Common myeloid progenitor, CD34-positive (primary cell): ENCODE measurements at regions of chr17 and their contacts with region 1.

Region 1: GRCh38 chr17:74474043-74474792 is 7.8 kb downstream of the CD300A start:
- DNase-seq: no peak
- H3K4me3 ChIP-seq: no peak overlapping the region
- H3K27ac ChIP-seq: no peak overlapping the region
- H3K4me1 ChIP-seq: peaks cover 2 to 32% (median 23%) of the 10 kb centered on the region in 4 experiments
- H3K27me3 ChIP-seq: no peaks in the 10 kb centered on the region

Region 2: DNA sequence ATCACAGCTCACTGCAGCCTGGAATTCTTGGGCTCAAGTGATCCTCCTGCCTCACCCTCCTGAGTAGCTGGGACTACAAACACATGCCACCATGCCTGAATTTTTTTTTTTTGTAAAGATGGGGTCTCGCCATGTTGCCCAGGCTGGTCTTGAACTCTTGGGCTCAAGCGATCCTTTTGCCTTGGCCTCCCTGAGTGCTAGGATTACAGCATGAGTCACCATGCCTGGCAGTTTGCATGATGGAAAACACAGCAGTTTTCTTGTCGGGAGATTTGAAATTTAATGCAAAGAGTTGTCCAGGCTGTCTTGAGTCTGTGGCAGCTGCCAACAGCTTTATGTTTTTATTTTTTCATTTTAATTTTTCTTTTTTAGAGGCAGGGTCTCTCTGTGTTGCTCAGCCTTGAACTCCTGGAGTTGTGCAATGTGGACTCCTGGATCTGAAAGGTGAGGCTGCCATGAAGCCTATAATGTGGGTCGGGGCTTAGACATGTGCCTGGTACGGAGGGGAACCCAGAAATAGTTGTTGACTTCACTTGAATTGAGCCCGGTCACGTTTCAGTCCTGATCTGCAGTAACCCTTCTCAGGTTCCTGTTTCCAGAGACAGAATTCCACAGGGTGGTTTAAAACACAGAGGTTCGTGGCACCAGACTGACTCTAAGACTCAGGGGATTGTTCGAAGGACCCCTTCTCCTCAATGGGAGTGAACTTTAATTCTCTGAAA is 11.0 kb after region 1 on chr17:
- CTCF ChIA-PET with region 1: interaction called, 13 read pairs
- POLR2A ChIA-PET with region 1: no interaction called
- DNase-seq: no peak
- H3K4me3 ChIP-seq: no peak overlapping the region
- H3K27ac ChIP-seq: no peak overlapping the region
- H3K4me1 ChIP-seq: peaks cover 0 to 2% (median 0%) of the 10 kb centered on the region in 4 experiments
- H3K27me3 ChIP-seq: no peaks in the 10 kb centered on the region